Endothelial cell of umbilical vein (primary cell): ENCODE measurements at regions of chr3 and their contacts with region 1.

Region 1: GRCh38 chr3:100254168-100254777 is 6.5 kb upstream of the TBC1D23 start:
- DNase-seq: peak; percentile 75
- H3K4me3 ChIP-seq: no peak overlapping the region
- H3K27ac ChIP-seq: no peak overlapping the region
- H3K4me1 ChIP-seq: no peaks in the 10 kb centered on the region
- H3K27me3 ChIP-seq: no peaks in the 10 kb centered on the region
- CTCF ChIP-seq: peak; percentile 76 to 81
- POLR2A ChIP-seq: no peak

Region 2: DNA sequence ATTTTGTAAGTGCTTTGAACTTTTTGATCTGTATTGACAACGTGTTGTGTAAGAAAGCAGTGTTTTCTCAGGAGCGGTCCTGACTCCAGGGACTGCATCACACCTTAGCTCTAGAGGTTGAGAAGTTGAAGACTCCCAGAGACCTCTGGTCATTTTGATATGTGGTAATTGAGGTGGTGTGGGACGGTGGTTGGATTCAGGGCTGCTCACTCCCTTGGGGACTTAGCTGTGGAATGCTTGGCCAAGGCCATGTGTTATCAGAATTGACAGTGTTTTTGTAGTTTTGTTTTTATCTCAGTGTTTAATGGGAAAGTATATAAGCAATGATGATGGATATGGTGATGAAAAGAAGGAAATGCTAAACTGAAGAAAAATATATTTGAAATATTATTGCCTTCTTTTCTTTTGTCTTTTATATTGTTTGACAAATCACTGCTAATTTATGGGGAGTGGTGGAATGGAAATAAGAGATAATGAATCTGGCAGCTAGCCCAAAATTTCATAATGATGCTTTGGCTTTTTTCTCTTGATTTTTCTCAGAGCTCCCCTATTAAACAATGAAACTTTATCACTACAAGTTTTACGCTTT is 420.6 kb before region 1 on chr3:
- CTCF ChIA-PET with region 1: interaction called, 120 read pairs
- POLR2A ChIA-PET with region 1: interaction called, 6 read pairs
- dilution Hi-C with region 1: no loop called
- intact Hi-C with region 1: loop called (anchors 1 kb)
- DNase-seq: peak; percentile 87
- H3K4me3 ChIP-seq: no peak overlapping the region
- H3K27ac ChIP-seq: no peak overlapping the region
- H3K4me1 ChIP-seq: peaks cover 23% of the 10 kb centered on the region
- H3K27me3 ChIP-seq: no peaks in the 10 kb centered on the region
- CTCF ChIP-seq: no peak
- POLR2A ChIP-seq: no peak

Region 3: GRCh38 chr3:99859825-99860224 is 394.4 kb before region 1 on chr3:
- CTCF ChIA-PET with region 1: interaction called, 26 read pairs
- POLR2A ChIA-PET with region 1: no interaction called
- dilution Hi-C with region 1: no loop called
- intact Hi-C with region 1: no loop called
- DNase-seq: peak; percentile 32
- H3K4me3 ChIP-seq: no peak overlapping the region
- H3K27ac ChIP-seq: peak overlapping the region; percentile 2
- H3K4me1 ChIP-seq: peaks cover 26% of the 10 kb centered on the region
- H3K27me3 ChIP-seq: no peaks in the 10 kb centered on the region
- CTCF ChIP-seq: no peak
- POLR2A ChIP-seq: no peak

Region 4: GRCh38 chr3:100006570-100007271 is 247.6 kb before region 1 on chr3:
- CTCF ChIA-PET with region 1: interaction called, 8 read pairs
- POLR2A ChIA-PET with region 1: interaction called, 4 read pairs
- dilution Hi-C with region 1: no loop called
- intact Hi-C with region 1: loop called (anchors 5 kb)
- DNase-seq: peak; percentile 72
- H3K4me3 ChIP-seq: no peak overlapping the region
- H3K27ac ChIP-seq: no peak overlapping the region
- H3K4me1 ChIP-seq: peaks cover 73% of the 10 kb centered on the region
- H3K27me3 ChIP-seq: no peaks in the 10 kb centered on the region
- CTCF ChIP-seq: no peak
- POLR2A ChIP-seq: no peak

Region 5: GRCh38 chr3:100159331-100160153 is 94.7 kb before region 1 on chr3:
- CTCF ChIA-PET with region 1: interaction called, 15 read pairs
- POLR2A ChIA-PET with region 1: no interaction called
- dilution Hi-C with region 1: no loop called
- intact Hi-C with region 1: loop called (anchors 5 kb)
- DNase-seq: peak; percentile 94
- H3K4me3 ChIP-seq: peak overlapping the region in 2 of 3 experiments; percentile 14 to 43
- H3K27ac ChIP-seq: peak overlapping the region; percentile 75
- H3K4me1 ChIP-seq: peaks cover 41% of the 10 kb centered on the region
- H3K27me3 ChIP-seq: no peaks in the 10 kb centered on the region
- CTCF ChIP-seq: no peak
- POLR2A ChIP-seq: peak; percentile 22